GM13976 (cell line): ENCODE measurements at regions of chr1 and their contacts with region 1.

Region 1: DNA sequence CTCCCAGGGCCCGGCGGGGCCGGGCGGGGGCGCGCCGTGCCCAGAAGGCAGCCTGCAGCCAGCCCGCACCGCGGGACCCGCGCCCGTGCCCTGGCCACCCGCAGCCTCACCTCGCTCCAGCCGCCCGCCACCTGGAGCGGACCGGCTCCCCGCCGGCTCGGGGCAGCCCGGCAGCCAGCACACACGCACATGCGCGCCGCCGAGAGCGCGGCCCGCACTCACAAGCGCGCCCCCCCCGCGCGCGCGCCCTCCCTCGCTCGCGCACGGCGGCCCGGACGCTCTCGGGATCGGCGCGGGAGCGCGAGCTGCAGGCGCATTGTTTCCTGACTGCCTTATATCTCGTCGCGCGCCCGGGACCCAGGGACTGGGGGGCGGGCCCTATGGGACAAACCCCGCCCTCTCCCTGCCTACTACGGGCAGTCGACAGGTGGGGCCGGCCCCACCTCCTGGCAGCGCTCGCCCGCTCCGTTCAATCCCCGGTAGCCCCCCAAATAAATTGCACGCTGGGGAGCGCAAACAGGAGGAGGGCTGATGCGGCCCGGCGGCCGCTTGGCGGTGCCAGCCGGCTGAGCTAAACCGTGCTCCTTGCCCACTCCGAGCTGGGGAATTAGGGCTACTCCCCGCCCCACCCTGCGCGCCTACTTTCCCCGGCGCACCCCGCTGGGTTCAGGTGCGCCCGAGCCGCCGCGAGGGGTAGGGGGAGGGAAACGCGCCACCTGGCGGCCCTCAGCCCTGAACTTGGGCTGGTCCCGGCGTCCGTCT is at the start of gene MYCL:
- DNase-seq: peak; percentile 89
- CTCF ChIP-seq: peak; percentile 83

Region 2: GRCh38 chr1:39816415-39817090 is 85.3 kb before region 1 on chr1:
- in situ Hi-C with region 1: loop called (anchors 25 kb)
- DNase-seq: peak; percentile 80
- CTCF ChIP-seq: peak; percentile 79